Transverse colon (tissue), 4 donors: ENCODE measurements at regions of chr22 and their contacts with region 1.

Region 1: DNA sequence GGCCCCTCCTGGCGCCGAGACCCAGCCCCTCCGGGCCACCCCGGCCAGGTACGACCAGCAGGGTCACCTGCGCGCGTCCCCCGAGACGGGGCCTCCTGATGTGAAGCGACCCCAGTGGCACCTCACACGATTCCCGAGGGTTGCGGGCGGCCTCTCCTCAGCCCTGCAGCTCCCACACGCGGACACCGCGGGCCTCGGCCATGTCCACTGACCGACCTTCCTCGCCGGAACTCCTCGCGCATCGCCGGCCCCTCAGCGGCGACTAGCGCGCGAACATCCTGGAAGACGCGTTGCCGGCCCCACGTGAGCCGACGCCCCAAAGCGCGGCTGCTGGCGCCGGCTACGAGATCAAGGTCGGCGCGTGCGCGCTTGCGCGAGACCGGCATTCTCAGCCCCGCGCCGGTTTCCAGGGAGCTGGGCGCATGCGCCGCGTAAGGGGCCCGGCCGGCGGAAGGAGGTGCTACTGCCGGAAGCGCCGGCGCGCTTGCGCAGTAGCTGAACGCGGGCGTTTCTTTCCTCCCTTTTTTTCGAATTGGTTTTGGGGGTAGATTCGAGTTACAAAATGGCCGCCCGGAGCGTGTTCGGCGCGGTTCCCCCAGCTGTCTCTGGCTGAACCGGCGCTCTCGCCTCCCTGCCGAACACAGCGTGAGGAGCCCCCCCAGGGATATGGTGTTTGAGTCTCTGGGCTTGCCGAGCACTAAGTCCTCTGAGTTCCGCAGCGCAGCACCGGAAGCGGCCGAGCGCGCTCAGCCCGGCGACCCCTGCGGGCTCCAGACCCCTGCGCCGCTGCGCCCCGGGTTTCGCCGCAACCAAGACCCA is at the start of gene NUP50:
- DNase-seq: peak; percentile 97
- H3K4me3 ChIP-seq: peak within 1 kb of the TSS; percentile 82 to 100 (median 92)
- H3K27ac ChIP-seq: peak within 1 kb of the TSS; percentile 93 to 97 (median 94)
- H3K4me1 ChIP-seq: peaks cover 15 to 63% (median 54%) of the 10 kb centered on the region in 4 donors
- H3K27me3 ChIP-seq: no peaks in the 10 kb centered on the region
- CTCF ChIP-seq: peak in 2 of 5 experiments; percentile 11 to 28
- EP300 ChIP-seq: no peak
- POLR2A ChIP-seq: peak; percentile 86
- total RNA-seq, gene NUP50: 47.0 to 152 (median 73.5) TPM

Region 2: DNA sequence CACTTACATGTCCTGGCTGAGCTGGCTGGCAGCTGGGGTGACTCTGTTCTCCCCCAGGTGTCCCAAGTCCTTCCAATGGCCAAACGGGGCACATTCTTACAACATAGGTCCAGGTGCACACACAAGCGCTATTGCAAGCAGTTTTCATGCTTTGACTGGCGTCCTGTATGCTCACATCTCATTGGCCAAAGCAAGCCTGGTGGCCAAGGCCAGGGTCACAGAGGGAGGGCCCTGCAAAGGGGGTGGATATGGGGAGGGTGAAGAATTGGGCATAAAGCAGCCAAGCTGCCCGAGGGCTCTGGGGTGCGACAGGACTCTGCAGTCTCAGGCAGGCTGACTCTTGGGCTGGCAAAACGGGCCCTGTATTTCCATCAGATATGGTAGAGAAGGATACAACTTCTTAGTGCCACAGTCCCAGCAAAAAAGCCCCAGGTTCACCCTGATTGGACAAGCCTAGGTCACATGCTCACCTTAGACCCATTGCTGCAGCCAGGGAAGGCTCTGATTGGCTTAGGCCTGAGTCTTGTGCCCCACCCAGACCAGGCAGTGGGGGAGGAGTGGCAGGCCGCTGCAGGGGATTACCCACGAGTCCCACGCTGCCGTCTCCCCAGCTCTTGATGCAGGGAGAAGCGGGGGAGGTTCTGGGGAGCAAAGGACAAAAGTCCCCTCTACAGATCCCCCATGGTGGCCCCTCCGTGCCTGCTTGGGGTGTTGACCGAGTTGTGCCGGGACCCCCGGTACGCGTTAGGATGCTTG is 300.5 kb before region 1 on chr22:
- in situ Hi-C with region 1: no loop called
- intact Hi-C with region 1: no loop called
- DNase-seq: no peak
- H3K4me3 ChIP-seq: no peak overlapping the region
- H3K27ac ChIP-seq: no peak overlapping the region
- H3K4me1 ChIP-seq: no peaks in the 10 kb centered on the region
- H3K27me3 ChIP-seq: no peaks in the 10 kb centered on the region
- CTCF ChIP-seq: no peak
- EP300 ChIP-seq: no peak
- POLR2A ChIP-seq: no peak

Region 3: GRCh38 chr22:45240810-45241631 is 77.4 kb after region 1 on chr22 and contains the start of gene KIAA0930:
- in situ Hi-C with region 1: loop called in 1 of 4 experiments (anchors 10 kb)
- intact Hi-C with region 1: no loop called
- DNase-seq: peak; percentile 88
- H3K4me3 ChIP-seq: peak within 1 kb of the TSS; percentile 54 to 90 (median 67)
- H3K27ac ChIP-seq: peak within 1 kb of the TSS; percentile 67 to 77 (median 72)
- H3K4me1 ChIP-seq: peaks cover 10 to 37% (median 23%) of the 10 kb centered on the region in 4 donors
- H3K27me3 ChIP-seq: no peaks in the 10 kb centered on the region
- CTCF ChIP-seq: no peak
- EP300 ChIP-seq: no peak
- POLR2A ChIP-seq: no peak
- total RNA-seq, gene KIAA0930: 18.0 to 51.2 (median 25.1) TPM